Activated T-helper 1 cell treated with anti-CD3 and anti-CD28 coated beads, Interleukin-12 subunit alpha, Interleukin-12 subunit beta, Interleukin-2, Interleukin-4 antibody, amounts not matched to agents 30 ng/mL and 10 ng/mL and 1 ng/mL, durations not matched to agents 14 hours and 24 hours and 36 hours (primary cell): ENCODE measurements at regions of chr5 and their contacts with region 1.

Region 1: DNA sequence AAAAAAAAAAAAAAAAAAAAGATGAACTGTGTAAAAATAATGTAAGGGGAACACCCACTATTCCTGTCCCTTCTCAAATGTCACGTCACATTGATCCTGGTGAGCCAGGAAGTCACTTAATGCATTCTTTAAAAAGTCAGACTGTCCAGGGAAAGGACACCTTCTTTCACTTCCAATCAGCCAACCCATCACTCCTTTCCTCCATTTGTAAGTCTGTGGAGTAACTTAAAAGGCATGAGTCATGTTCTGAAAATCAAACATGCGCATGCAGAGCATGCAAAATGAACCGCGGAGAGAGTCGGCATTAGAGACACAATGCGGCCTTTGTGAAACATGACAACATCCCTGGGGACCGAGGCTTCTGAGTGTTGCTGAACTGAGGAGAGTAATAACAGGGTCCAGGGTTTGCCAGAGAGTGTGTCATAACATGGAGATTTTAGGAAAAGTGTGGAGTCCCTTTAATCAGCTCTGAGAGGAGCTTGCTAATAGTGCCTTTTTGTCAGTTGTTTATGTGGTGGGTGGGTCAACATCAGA is 77.6 kb upstream of the SEMA6A start:
- DNase-seq: no peak
- H3K4me3 Mint-ChIP-seq: no peak overlapping the region
- H3K27ac Mint-ChIP-seq: no peak overlapping the region
- H3K4me1 Mint-ChIP-seq: no peaks in the 10 kb centered on the region
- H3K27me3 Mint-ChIP-seq: peaks cover 4% of the 10 kb centered on the region

Region 2: DNA sequence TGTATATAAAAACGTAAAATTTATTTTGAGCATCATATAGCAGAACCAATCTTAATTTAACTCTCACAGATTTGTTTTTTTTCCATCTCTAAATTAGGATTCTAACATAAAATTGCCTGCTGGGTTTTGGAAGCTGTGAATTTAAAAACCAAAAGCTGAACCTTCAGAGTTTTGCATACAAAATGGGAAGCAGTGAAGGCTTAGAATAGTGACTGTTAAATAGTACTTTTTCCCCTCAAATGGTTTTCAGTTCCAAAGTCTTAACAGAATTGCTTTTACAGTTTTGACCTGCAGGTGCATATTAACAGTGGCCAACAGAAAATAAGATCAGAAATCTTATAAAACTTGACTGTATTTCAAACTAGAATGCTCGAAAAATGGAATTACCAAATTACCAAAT is 745.1 kb before region 1 on chr5:
- intact Hi-C with region 1: loop called (anchors 5 kb)
- DNase-seq: no peak
- H3K4me3 Mint-ChIP-seq: no peak overlapping the region
- H3K27ac Mint-ChIP-seq: no peak overlapping the region
- H3K4me1 Mint-ChIP-seq: no peaks in the 10 kb centered on the region
- H3K27me3 Mint-ChIP-seq: no peaks in the 10 kb centered on the region

Region 3: GRCh38 chr5:116209166-116209565 is 443.1 kb before region 1 on chr5:
- intact Hi-C with region 1: no loop called
- DNase-seq: no peak
- H3K4me3 Mint-ChIP-seq: no peak overlapping the region
- H3K27ac Mint-ChIP-seq: no peak overlapping the region
- H3K4me1 Mint-ChIP-seq: no peaks in the 10 kb centered on the region
- H3K27me3 Mint-ChIP-seq: no peaks in the 10 kb centered on the region